GM12878 (cell line): ENCODE measurements at regions of chr3 and their contacts with region 1.

Region 1: DNA sequence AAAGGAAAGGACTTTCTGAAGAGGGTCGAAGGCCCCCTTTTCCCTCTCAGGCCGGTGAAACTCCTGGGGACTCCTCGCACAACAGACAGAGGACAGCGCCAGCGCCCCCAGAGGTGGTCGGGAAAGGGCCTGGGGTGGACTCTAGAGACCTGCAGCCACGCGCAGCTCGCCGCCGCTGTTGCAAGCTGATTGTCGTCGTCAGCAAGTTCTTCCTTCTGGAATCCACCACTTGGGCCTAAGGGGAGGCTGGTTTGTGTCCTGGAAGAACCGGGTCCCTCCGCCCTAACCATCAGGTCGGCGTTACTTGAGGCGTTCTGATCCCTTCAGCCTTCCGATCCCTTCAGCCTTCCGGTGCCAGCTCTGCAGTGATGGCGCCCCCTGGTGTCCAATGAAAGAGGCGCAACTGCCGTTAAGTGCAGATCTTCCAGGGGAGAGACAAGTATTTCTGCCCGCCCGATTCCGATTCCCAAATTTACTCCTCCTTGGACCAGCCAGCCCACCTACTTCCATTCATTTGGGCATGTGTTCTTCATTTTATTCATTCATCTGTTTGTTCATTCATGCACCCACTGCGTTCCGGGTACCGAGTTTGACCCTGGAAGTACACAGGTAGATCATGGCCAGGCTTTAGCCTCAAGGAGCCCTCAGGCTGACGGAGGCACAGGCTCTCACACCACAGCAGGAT is 77.2 kb upstream of the SLC6A11 start:
- DNase-seq: no peak
- ATAC-seq: peak; percentile 82
- H3K4me3 ChIP-seq: no peak overlapping the region
- H3K27ac ChIP-seq: no peak overlapping the region
- H3K4me1 ChIP-seq: no peaks in the 10 kb centered on the region
- H3K27me3 ChIP-seq: no peaks in the 10 kb centered on the region
- CTCF ChIP-seq: peak; percentile 69 to 75 (median 72)
- EP300 ChIP-seq: no peak
- POLR2A ChIP-seq: no peak
- RAD21 ChIP-seq: peak; percentile 61

Region 2: GRCh38 chr3:10344147-10344943 is 394.5 kb before region 1 on chr3:
- CTCF ChIA-PET with region 1: interaction called, 34 read pairs
- POLR2A ChIA-PET with region 1: interaction called, 7 read pairs
- RAD21 ChIA-PET with region 1: interaction called, 17 read pairs
- SMC1A ChIA-PET with region 1: interaction called, 4 read pairs
- in situ Hi-C with region 1: loop called (anchors 5 kb)
- intact Hi-C with region 1: loop called (anchors 1 kb)
- DNase-seq: no peak
- ATAC-seq: peak; percentile 80
- H3K4me3 ChIP-seq: no peak overlapping the region
- H3K27ac ChIP-seq: no peak overlapping the region
- H3K4me1 ChIP-seq: no peaks in the 10 kb centered on the region
- H3K27me3 ChIP-seq: no peaks in the 10 kb centered on the region; a peak in 1 of 4 replicates
- CTCF ChIP-seq: peak; percentile 87 to 95 (median 90)
- EP300 ChIP-seq: no peak
- POLR2A ChIP-seq: no peak
- RAD21 ChIP-seq: peak; percentile 82

Region 3: DNA sequence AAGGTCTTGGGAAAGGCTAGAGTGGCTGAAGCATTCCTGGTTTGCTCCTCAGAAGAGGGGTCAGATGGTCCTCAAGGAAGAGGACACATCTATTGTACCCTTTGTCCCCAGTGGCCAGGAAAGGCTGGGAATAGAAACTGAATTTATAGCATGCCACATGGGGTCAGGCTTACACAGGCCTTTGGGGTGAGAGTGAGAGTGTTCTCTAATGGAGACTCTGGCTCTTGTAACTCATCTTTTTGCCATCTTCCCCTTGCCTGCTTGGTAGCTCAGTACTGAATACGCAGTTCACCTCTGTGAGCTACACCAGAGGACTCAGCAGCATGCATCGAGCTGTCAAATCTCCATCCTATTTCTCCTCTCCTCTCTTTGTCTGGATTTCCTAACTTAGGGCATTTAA is 321.0 kb before region 1 on chr3:
- CTCF ChIA-PET with region 1: interaction called, 19 read pairs
- POLR2A ChIA-PET with region 1: no interaction called
- RAD21 ChIA-PET with region 1: interaction called, 3 read pairs
- SMC1A ChIA-PET with region 1: interaction called, 5 read pairs
- in situ Hi-C with region 1: no loop called
- intact Hi-C with region 1: loop called (anchors 1 kb)
- DNase-seq: no peak
- ATAC-seq: peak; percentile 54
- H3K4me3 ChIP-seq: no peak overlapping the region
- H3K27ac ChIP-seq: no peak overlapping the region
- H3K4me1 ChIP-seq: no peaks in the 10 kb centered on the region; the same call in 1 of the 2 replicates
- H3K27me3 ChIP-seq: peaks cover 0 to 4% of the 10 kb centered on the region in 2 experiments; a peak in 3 of 4 replicates
- CTCF ChIP-seq: peak; percentile 32 to 37 (median 33); a peak in 4 of 6 replicates
- EP300 ChIP-seq: no peak
- POLR2A ChIP-seq: no peak
- RAD21 ChIP-seq: peak; percentile 73